Activated CD4-positive, alpha-beta T cell treated with anti-CD3 and anti-CD28 coated beads, Interleukin-2, amount 10 ng/mL, durations not matched to agents 24 days and 14 days (primary cell): ENCODE measurements at regions of chr3 and their contacts with region 1.

Region 1: DNA sequence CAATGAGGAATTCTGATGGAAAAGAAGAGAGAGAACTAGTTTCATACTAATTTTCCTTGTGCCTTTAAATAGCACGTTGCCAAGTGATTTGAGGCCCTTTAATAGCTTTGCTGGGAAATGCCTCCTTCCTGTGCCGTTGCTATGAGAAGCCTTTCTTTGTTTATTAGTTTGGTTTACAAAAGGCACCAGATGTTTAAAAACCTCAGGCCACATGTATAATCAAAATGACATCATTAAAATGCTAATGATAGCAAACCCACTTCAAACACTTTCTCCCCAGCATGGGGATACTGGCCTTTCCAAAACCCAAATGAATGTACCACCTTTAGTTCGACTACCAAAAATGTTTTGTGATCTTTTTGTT is 50.0 kb upstream of the TBC1D23 start:
- DNase-seq: peak; percentile 75
- H3K4me3 Mint-ChIP-seq: no peak overlapping the region
- H3K27ac Mint-ChIP-seq: peak overlapping the region; percentile 82
- H3K4me1 Mint-ChIP-seq: peaks cover 20% of the 10 kb centered on the region
- H3K27me3 Mint-ChIP-seq: peaks cover 3% of the 10 kb centered on the region

Region 2: GRCh38 chr3:99803297-99803696 is 407.5 kb before region 1 on chr3:
- intact Hi-C with region 1: no loop called
- DNase-seq: no peak
- H3K4me3 Mint-ChIP-seq: no peak overlapping the region
- H3K27ac Mint-ChIP-seq: no peak overlapping the region
- H3K4me1 Mint-ChIP-seq: peaks cover 3% of the 10 kb centered on the region
- H3K27me3 Mint-ChIP-seq: peaks cover 2% of the 10 kb centered on the region

Region 3: GRCh38 chr3:99817437-99818240 is 393.1 kb before region 1 on chr3 and contains the start of gene CMSS1:
- intact Hi-C with region 1: loop called (anchors 5 kb)
- DNase-seq: peak; percentile 99
- H3K4me3 Mint-ChIP-seq: peak within 1 kb of the TSS; percentile 100
- H3K27ac Mint-ChIP-seq: peak within 1 kb of the TSS; percentile 99
- H3K4me1 Mint-ChIP-seq: peaks cover 31% of the 10 kb centered on the region
- H3K27me3 Mint-ChIP-seq: peaks cover 2% of the 10 kb centered on the region
- total RNA-seq, gene CMSS1: 117 and 126 TPM in 2 replicates

Region 4: DNA sequence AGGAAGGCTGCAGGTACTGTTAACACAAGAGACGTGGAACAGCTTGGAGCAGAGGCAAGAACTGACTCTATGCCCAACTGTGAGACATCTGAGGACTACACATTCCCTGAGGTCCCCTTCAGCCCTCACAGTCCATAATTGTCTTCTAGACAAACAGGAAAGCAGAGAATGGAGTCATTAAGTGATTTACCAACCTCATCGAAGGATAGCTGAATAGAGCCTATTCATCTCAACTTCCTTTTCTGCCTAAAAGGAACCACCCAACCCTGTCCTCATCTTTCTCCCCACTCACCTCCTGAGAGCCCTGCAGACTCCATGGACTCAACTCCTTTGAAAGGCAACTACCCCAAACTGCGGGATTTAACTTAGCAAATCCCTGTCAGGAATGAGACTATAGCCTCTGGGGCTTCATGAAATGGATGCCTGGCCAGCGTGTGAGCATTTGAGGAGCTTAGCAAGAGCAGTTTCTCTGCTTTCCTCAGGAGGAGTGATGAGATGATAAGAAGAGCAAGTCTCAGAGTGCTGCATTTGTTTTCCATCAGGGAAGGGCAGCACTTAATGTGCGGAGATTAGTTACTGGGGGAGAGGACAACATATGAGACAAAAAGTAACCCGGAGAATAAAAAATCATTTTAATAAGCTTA is 35.0 kb before region 1 on chr3:
- intact Hi-C with region 1: no loop called
- DNase-seq: no peak
- H3K4me3 Mint-ChIP-seq: no peak overlapping the region
- H3K27ac Mint-ChIP-seq: no peak overlapping the region
- H3K4me1 Mint-ChIP-seq: peaks cover under 1% of the 10 kb centered on the region
- H3K27me3 Mint-ChIP-seq: no peaks in the 10 kb centered on the region

Region 5: DNA sequence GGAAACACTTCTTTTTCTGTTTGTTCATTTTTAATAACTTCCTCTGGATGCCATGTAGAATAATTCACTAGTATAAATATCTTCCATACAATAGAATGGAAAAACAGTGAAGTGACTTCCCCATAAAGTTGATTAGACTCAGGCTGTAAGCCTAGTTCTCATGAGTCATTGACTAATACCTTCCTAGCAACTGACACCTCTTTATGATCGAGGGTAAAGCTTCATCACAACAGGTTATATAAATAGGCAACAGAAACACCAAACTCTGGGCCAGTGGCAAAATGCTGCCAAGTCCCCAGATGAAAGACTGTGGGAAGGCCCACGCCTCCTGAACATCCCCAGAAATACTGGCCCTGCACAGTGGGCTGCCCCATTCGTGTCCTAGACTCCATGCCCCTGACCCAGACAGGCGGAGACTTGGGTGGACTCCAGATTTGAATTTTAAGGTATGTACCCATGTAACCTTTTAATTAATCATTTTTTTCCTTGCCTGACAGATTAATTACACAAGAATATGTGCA is 21.2 kb before region 1 on chr3:
- intact Hi-C with region 1: no loop called
- DNase-seq: peak; percentile 41
- H3K4me3 Mint-ChIP-seq: no peak overlapping the region
- H3K27ac Mint-ChIP-seq: no peak overlapping the region
- H3K4me1 Mint-ChIP-seq: no peaks in the 10 kb centered on the region
- H3K27me3 Mint-ChIP-seq: peaks cover 5% of the 10 kb centered on the region

Region 6: DNA sequence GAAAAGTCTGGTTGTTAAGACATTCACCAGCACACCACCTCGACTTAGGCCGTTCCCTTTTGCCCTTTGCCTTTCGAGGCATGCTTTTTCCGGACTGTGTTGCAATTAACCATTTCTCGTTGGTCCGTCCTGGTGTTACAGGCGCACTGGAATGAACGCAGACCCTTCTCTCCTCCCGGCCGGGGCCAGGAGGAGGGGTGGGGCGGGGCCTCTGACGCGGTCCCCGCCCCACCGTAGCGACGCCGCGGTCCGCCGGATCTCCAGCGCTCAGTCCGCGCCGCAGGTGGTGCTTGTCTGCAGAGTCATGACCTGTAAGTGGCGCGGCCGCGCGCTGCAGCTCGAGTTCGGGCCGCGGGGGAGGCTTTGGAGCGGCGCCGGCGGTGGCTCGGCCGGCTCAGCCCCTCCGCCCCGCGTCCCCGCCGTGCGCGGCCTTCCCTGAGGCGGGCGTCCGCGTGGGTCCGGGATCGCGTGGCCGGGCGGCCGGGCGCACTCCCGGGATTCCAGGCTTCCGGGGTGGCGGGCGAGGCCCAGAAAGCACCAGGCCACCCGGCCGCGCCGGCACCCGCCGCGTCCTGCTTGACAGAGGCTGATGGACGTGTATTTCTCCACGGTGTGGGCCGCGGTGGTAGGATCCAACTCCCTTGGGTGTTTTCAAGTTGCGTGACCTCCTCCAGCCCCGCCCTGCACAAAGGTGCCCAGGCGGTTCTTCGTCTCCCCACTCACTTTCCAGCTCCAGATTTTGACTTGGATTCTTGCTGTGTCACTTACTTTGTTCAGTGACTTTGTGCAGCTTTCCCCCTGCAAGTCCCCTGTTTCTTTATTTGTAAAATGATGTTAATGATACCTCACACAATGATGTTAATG is 124.0 kb after region 1 on chr3 and contains the start of gene NIT2:
- intact Hi-C with region 1: no loop called
- DNase-seq: peak; percentile 93
- H3K4me3 Mint-ChIP-seq: peak within 1 kb of the TSS; percentile 95
- H3K27ac Mint-ChIP-seq: peak within 1 kb of the TSS; percentile 98
- H3K4me1 Mint-ChIP-seq: peaks cover 18% of the 10 kb centered on the region
- H3K27me3 Mint-ChIP-seq: no peaks in the 10 kb centered on the region
- total RNA-seq, gene NIT2: 75.5 and 79.2 TPM in 2 replicates